MCF 10A (cell line): ENCODE measurements at regions of chr15 and their contacts with region 1.

Region 1: DNA sequence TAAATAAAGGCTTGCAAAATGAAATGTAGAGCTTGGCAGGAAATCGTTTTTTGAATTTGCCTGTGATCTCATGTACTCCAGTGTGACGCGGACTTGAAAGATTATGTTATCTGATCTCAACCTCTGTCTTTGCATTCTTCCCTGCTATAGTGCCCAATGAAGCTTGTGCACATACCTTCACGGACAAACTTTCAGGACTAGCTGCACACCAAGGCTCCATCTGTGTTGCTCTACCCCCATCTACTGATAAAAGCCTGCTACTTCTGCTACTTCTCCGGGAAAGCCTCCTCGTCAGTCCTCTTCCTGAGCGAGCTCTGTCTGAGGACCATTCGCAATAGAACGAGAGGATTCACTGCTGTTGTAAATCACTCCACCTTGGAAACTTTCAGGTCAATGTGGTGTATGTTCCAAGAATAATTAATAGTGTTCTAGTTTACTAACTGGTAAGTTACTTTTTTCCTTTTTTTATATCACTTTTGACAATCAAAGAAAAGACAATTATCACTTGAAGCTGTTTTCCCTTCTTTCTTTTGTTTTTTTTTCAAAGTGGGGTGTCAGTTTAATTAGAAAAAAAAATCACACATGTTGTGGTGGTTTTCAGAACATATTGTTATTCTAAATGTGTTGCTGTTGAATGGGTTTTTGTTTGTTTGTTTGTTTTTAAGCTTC is 217.6 kb downstream of the ARRDC4 start:
- DNase-seq: peak; percentile 78
- H3K4me3 Mint-ChIP-seq: no peak overlapping the region
- H3K27ac Mint-ChIP-seq: no peak overlapping the region
- H3K4me1 Mint-ChIP-seq: peaks cover 6% of the 10 kb centered on the region
- H3K27me3 Mint-ChIP-seq: no peaks in the 10 kb centered on the region
- CTCF ChIP-seq: peak; percentile 93

Region 2: DNA sequence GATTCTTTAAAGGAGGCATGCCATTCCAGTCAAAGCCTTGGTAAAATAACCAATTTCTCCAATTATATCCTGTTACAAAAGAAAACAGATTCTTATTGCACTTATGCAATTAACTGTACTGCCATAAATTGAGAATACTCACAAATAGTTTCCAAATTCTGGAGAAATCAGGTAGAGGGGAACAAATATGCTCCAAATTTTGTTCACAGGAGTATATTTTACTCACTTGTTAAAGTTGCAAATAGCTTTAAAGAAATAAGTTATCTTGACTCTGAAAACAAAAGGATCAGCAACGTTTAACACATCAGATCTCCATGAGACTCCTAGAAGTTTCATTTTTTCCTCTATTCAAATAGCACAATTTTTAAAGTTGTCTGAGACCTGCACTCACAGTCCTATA is 929.7 kb before region 1 on chr15:
- CTCF ChIA-PET with region 1: interaction called, 10 read pairs
- POLR2A ChIA-PET with region 1: no interaction called
- intact Hi-C with region 1: no loop called
- DNase-seq: no peak
- H3K4me3 Mint-ChIP-seq: no peak overlapping the region
- H3K27ac Mint-ChIP-seq: no peak overlapping the region
- H3K4me1 Mint-ChIP-seq: no peaks in the 10 kb centered on the region
- H3K27me3 Mint-ChIP-seq: peaks cover 60% of the 10 kb centered on the region
- CTCF ChIP-seq: no peak

Region 3: GRCh38 chr15:97893967-97894366 is 284.1 kb before region 1 on chr15:
- CTCF ChIA-PET with region 1: interaction called, 57 read pairs
- POLR2A ChIA-PET with region 1: no interaction called
- intact Hi-C with region 1: no loop called
- DNase-seq: peak; percentile 42
- H3K4me3 Mint-ChIP-seq: no peak overlapping the region
- H3K27ac Mint-ChIP-seq: no peak overlapping the region
- H3K4me1 Mint-ChIP-seq: no peaks in the 10 kb centered on the region
- H3K27me3 Mint-ChIP-seq: peaks cover 2% of the 10 kb centered on the region
- CTCF ChIP-seq: no peak

Region 4: DNA sequence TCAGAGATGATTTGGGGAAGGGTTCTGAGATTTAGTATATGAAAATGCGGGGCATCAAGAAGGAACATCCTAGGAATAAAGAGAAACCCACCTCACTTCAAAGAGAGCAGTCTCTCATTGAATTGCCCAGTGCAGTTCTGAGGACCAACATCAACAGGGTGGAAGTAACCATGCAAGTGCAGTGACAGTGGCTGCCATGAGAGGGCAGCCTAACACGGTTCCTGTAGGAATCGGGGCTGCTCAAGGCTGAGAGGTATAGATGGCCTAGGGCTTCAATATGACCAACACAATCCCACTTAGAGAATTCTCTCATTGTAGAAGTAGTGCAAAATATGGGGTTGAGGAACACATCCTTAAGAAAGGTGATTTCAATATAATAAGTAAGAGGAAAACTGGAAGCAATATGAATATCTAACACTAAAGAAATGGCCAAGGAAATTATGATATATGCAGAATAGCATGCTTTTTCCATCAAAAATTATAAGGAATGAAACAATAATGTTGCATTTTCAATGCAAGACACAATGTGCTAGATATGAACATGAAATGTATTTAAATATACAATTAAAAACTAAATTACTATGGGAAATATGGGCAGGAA is 268.7 kb before region 1 on chr15:
- CTCF ChIA-PET with region 1: interaction called, 158 read pairs
- POLR2A ChIA-PET with region 1: interaction called, 7 read pairs
- intact Hi-C with region 1: loop called (anchors 1 kb)
- DNase-seq: peak; percentile 66
- H3K4me3 Mint-ChIP-seq: no peak overlapping the region
- H3K27ac Mint-ChIP-seq: no peak overlapping the region
- H3K4me1 Mint-ChIP-seq: peaks cover 8% of the 10 kb centered on the region
- H3K27me3 Mint-ChIP-seq: no peaks in the 10 kb centered on the region
- CTCF ChIP-seq: peak; percentile 93

Region 5: DNA sequence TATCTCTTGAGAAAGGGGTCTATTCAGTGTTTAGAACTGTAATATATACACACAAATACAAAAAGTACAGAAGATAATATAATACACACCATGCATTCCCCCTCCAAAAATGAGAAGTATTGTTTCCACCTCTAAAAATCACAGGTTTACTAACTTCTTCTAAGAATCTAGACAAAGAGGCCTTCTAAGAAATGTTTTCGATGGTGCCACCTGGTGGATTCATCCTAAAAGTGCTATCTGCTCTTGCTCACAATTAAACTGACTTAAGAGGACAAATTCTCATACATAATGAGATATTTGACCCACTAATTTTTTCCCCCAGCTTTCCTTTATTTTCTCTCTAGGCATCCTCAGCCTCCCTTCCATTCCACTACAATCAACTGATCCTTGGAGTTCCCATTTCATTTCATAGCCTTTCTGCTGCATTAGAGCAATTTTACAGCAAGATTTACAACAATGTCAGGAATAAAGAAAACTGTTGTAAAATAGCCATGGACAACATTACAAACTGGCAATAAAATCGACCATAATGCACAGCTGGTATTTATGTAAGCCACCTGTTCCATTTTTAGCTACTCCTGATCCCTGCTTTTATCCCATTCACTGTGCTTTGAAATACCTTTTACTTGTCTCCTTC is 92.9 kb before region 1 on chr15:
- CTCF ChIA-PET with region 1: interaction called, 22 read pairs
- POLR2A ChIA-PET with region 1: interaction called, 3 read pairs
- intact Hi-C with region 1: loop called (anchors 1 kb)
- DNase-seq: peak; percentile 74
- H3K4me3 Mint-ChIP-seq: no peak overlapping the region
- H3K27ac Mint-ChIP-seq: no peak overlapping the region
- H3K4me1 Mint-ChIP-seq: no peaks in the 10 kb centered on the region
- H3K27me3 Mint-ChIP-seq: no peaks in the 10 kb centered on the region
- CTCF ChIP-seq: peak; percentile 53

Region 6: DNA sequence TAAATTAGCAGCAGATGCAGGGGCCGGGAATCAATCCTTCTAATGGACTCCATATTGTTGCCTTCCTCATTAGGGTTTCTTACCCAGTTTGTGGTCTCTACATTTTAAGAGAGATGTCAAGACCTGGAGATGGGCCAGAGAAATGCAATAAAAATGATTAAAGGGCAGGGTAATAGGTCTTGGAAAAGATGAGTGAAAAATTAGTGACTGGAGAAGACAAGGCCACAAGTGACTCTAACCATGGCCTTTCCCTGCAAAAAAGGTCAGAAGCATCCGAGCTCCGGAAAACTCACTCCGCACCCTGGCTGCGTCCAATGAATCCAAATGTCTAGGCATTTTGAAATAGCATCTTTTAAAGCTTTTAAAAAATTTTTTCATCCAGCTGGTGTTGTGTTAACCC is 64.7 kb before region 1 on chr15:
- CTCF ChIA-PET with region 1: no interaction called
- POLR2A ChIA-PET with region 1: no interaction called
- intact Hi-C with region 1: no loop called
- DNase-seq: no peak
- H3K4me3 Mint-ChIP-seq: no peak overlapping the region
- H3K27ac Mint-ChIP-seq: no peak overlapping the region
- H3K4me1 Mint-ChIP-seq: no peaks in the 10 kb centered on the region
- H3K27me3 Mint-ChIP-seq: no peaks in the 10 kb centered on the region
- CTCF ChIP-seq: no peak

Region 7: DNA sequence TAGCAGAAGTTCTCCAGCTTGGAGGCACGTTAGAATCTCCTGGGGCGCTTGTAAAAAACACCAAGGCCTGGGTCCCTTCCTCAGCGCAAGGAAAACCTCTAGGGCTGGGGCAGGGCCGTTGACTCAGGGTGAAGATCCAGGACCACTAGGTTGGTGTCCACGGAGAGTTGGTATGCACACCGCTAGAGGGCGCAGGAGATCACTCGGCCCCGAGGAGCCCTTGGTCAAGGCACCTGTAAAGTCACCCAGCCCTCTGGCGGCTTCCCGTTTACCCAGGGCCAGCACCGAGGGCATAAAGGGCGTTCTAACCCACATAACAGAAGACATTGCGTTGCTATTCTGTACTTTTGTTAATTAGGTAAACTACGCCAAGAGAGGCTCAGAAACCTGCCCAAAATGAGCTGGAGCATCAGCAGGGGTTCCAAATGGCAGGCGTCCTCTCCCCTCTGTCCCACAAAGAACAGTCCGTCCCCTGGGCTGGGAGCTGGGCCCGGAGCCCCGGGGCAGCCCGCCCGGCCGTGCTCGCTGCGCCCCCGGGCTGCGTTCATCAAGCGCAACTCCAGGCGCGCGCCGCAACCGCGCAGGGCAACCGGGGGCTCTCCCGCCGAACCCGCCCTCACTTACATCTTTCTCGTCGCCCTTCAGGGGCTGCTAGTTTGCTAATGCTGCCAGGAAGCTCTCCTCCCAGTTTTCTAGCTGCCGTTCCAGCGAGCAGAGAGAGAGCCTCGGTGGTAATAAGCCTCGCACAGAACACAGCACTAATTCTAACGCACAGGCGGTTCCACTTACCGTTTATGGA is 114.6 kb after region 1 on chr15:
- CTCF ChIA-PET with region 1: interaction called, 6 read pairs
- POLR2A ChIA-PET with region 1: no interaction called
- intact Hi-C with region 1: loop called (anchors 1 kb)
- DNase-seq: peak; percentile 60
- H3K4me3 Mint-ChIP-seq: no peak overlapping the region
- H3K27ac Mint-ChIP-seq: no peak overlapping the region
- H3K4me1 Mint-ChIP-seq: no peaks in the 10 kb centered on the region
- H3K27me3 Mint-ChIP-seq: peaks cover 16% of the 10 kb centered on the region
- CTCF ChIP-seq: peak; percentile 78

Region 8: GRCh38 chr15:98562331-98562937 is 384.4 kb after region 1 on chr15:
- CTCF ChIA-PET with region 1: no interaction called
- POLR2A ChIA-PET with region 1: no interaction called
- intact Hi-C with region 1: no loop called
- DNase-seq: no peak
- H3K4me3 Mint-ChIP-seq: no peak overlapping the region
- H3K27ac Mint-ChIP-seq: peak overlapping the region; percentile 76
- H3K4me1 Mint-ChIP-seq: peaks cover 13% of the 10 kb centered on the region
- H3K27me3 Mint-ChIP-seq: peaks cover 4% of the 10 kb centered on the region
- CTCF ChIP-seq: no peak

Region 9: DNA sequence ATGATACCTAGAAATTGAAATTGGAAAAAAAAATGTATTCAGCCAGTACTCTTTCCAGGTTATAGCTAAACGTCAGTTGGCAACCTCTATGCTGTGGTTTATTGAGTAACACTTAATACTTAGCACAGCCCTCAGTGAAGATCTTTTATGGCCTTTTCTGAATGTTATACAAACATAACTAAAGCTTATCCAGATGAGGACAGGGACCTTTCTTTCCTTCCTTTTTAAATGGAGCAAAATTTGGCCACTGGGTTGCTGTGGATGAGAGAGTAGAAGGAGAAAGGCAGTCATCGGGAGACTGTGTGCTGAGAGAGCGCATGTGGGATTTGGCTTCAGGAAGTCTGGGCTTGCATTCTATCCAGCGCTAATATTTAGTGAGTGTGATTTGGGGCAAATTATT is 506.4 kb after region 1 on chr15:
- CTCF ChIA-PET with region 1: no interaction called
- POLR2A ChIA-PET with region 1: no interaction called
- intact Hi-C with region 1: no loop called
- DNase-seq: peak; percentile 72
- H3K4me3 Mint-ChIP-seq: peak overlapping the region; percentile 53
- H3K27ac Mint-ChIP-seq: peak overlapping the region; percentile 95
- H3K4me1 Mint-ChIP-seq: peaks cover 59% of the 10 kb centered on the region
- H3K27me3 Mint-ChIP-seq: no peaks in the 10 kb centered on the region
- CTCF ChIP-seq: no peak